Naive thymus-derived CD4-positive, alpha-beta T cell (primary cell): ENCODE measurements at regions of chr18 and their contacts with region 1.

Region 1: GRCh38 chr18:24397694-24398365 is at the start of gene OSBPL1A:
- DNase-seq: peak; percentile 50 to 68 (median 63)
- ATAC-seq: peak; percentile 95
- H3K4me3 ChIP-seq: peak within 1 kb of the TSS; percentile 71
- H3K4me3 Mint-ChIP-seq: peak within 1 kb of the TSS; percentile 82 to 91 (median 88)
- H3K27ac ChIP-seq: no peak within 1 kb of the TSS
- H3K27ac Mint-ChIP-seq: peak within 1 kb of the TSS in 6 of 9 donors; percentile 7 to 84 (median 33)
- H3K4me1 ChIP-seq: peaks cover 0 to 6% of the 10 kb centered on the region in 2 donors
- H3K4me1 Mint-ChIP-seq: peaks cover 0 to 24% (median 12%) of the 10 kb centered on the region in 7 donors
- H3K27me3 ChIP-seq: no peaks in the 10 kb centered on the region
- H3K27me3 Mint-ChIP-seq: peaks cover 5 to 40% (median 10%) of the 10 kb centered on the region in 5 donors
- total RNA-seq, gene OSBPL1A: 1.8 to 7.7 (median 4.3) TPM

Region 2: GRCh38 chr18:24362758-24363157 is 35.1 kb before region 1 on chr18:
- CTCF ChIA-PET with region 1: no interaction called
- POLR2A ChIA-PET with region 1: no interaction called
- intact Hi-C with region 1: loop called in 1 of 2 experiments (anchors 1 kb)
- DNase-seq: no peak
- ATAC-seq: no peak
- H3K4me3 ChIP-seq: no peak overlapping the region
- H3K4me3 Mint-ChIP-seq: no peak overlapping the region
- H3K27ac ChIP-seq: no peak overlapping the region
- H3K27ac Mint-ChIP-seq: no peak overlapping the region
- H3K4me1 ChIP-seq: no peaks in the 10 kb centered on the region
- H3K4me1 Mint-ChIP-seq: peaks cover 0 to 2% (median 0%) of the 10 kb centered on the region in 7 donors
- H3K27me3 ChIP-seq: no peaks in the 10 kb centered on the region
- H3K27me3 Mint-ChIP-seq: no peaks in the 10 kb centered on the region

Region 3: GRCh38 chr18:24380163-24380747 is 17.6 kb before region 1 on chr18:
- CTCF ChIA-PET with region 1: no interaction called
- POLR2A ChIA-PET with region 1: no interaction called
- intact Hi-C with region 1: no loop called
- DNase-seq: no peak
- ATAC-seq: no peak
- H3K4me3 ChIP-seq: no peak overlapping the region
- H3K4me3 Mint-ChIP-seq: no peak overlapping the region
- H3K27ac ChIP-seq: no peak overlapping the region
- H3K27ac Mint-ChIP-seq: no peak overlapping the region
- H3K4me1 ChIP-seq: no peaks in the 10 kb centered on the region
- H3K4me1 Mint-ChIP-seq: peaks cover 0 to 6% (median 0%) of the 10 kb centered on the region in 7 donors
- H3K27me3 ChIP-seq: no peaks in the 10 kb centered on the region
- H3K27me3 Mint-ChIP-seq: peaks cover 0 to 8% (median 0%) of the 10 kb centered on the region in 5 donors

Region 4: DNA sequence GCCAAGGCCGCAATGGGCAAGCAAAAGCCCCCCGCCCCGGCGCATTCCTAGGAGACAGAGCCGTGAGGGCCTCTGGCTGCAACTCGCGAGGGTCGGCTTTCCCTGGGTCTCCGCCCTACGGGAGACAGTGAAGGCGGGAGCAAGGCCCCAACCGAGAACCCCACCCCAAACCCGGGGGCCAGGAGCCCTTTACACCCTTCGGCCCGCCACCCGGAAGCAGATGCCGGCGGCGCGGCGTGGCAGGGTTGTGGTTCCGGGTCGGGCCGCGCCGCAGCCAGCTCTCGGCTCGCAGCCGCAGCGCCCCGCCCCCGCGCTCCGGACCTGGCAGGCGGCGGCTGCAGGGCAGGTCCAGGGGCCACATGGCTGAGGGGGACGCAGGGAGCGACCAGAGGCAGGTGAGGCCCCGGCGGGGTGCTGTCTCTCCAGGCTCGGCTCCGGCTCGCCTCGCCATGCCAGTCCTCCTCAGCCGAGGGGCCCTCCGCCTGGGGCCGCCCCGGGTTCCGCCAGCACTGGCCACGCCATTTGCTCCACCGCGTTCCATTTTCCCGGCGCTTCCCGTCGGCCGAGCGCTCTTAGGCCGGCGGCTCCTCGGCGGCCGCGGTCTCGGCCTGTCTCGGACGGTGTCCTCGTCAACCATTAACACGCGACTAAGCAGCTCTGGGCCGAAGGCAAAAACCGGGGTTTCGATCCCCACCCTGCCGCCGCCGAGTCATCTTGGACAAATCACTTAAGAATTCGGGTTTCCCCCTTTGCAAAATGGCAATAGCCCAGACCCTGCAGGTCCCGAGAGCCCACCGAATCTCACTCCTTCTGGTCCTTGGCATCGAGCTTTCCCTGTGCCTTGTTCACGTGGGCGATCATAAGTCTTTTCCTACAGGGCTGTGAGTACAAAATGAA is 28.8 kb after region 1 on chr18 and contains the start of gene IMPACT:
- CTCF ChIA-PET with region 1: no interaction called
- POLR2A ChIA-PET with region 1: interaction called, 5 read pairs
- intact Hi-C with region 1: loop called (anchors 1 to 2 kb)
- DNase-seq: peak; percentile 50 to 87 (median 77)
- ATAC-seq: peak; percentile 95
- H3K4me3 ChIP-seq: peak within 1 kb of the TSS; percentile 70
- H3K4me3 Mint-ChIP-seq: peak within 1 kb of the TSS; percentile 86 to 93 (median 91)
- H3K27ac ChIP-seq: peak within 1 kb of the TSS; percentile 68
- H3K27ac Mint-ChIP-seq: peak within 1 kb of the TSS; percentile 73 to 92 (median 88)
- H3K4me1 ChIP-seq: peaks cover 6 to 11% of the 10 kb centered on the region in 2 donors
- H3K4me1 Mint-ChIP-seq: peaks cover 10 to 32% (median 25%) of the 10 kb centered on the region in 7 donors
- H3K27me3 ChIP-seq: no peaks in the 10 kb centered on the region
- H3K27me3 Mint-ChIP-seq: peaks cover 22 to 35% (median 28%) of the 10 kb centered on the region in 5 donors
- total RNA-seq, gene IMPACT: 7.8 to 17.5 (median 15.5) TPM

Region 5: DNA sequence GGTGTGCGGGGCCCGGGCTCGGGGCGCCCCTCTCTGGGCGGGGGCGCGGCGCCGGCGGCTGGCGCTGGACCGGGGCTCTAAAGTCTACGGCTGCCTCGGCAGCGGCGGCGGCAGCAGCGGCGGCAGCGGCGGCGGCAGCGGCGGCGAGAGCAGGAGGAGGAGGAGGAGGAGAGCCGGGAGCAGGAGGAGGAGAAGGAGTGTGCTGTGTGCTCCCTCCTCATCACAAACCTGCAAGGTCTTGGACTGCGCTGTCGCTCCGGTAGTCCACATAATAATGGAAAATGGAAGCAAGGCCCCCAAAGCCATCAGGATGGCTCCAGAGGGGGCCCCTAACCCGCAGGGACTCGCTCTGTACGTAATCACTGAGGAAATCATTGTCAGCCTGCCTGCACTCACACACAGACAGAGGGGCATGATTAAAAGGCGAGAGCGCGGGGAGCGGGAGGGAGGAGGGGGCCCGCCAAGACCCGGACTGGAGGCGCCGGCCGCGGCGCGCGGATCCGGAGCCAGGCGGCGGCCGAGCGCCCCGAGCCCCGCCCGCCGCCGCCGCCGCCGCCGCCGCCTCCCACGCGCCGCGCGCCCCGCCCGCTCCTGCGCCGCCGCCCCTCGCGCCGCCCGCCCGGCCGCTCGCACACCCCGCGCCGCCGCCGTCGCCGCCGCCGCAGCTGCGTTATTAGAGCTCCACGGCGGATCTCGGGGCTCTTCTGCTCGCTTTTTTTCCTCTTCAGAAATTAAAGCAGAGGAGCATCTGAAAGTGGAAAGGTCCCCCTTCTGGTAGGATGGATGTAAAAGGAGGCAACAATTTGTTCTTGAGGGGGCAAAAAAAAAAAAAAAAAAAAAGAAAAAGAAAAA is 954.2 kb after region 1 on chr18 and contains the start of gene ZNF521:
- CTCF ChIA-PET with region 1: no interaction called
- POLR2A ChIA-PET with region 1: no interaction called
- intact Hi-C with region 1: loop called in 1 of 2 experiments (anchors 10 kb)
- DNase-seq: peak in 8 of 9 donors; percentile 17 to 66 (median 28)
- ATAC-seq: peak; percentile 83
- H3K4me3 ChIP-seq: peak within 1 kb of the TSS; percentile 38
- H3K4me3 Mint-ChIP-seq: peak within 1 kb of the TSS; percentile 66 to 90 (median 84)
- H3K27ac ChIP-seq: no peak within 1 kb of the TSS
- H3K27ac Mint-ChIP-seq: peak within 1 kb of the TSS in 1 of 9 donors; percentile 9
- H3K4me1 ChIP-seq: peaks cover 0 to 11% of the 10 kb centered on the region in 2 donors
- H3K4me1 Mint-ChIP-seq: peaks cover 9 to 27% (median 17%) of the 10 kb centered on the region in 7 donors
- H3K27me3 ChIP-seq: peaks cover 6 to 26% of the 10 kb centered on the region in 2 donors
- H3K27me3 Mint-ChIP-seq: peaks cover 55 to 70% (median 66%) of the 10 kb centered on the region in 5 donors
- total RNA-seq, gene ZNF521: 1.1 to 4.4 TPM in 2 of 5 experiments, not detected in the others